ENCODE measurements at regions of chr15 and their contacts with region 1.

Region 1: DNA sequence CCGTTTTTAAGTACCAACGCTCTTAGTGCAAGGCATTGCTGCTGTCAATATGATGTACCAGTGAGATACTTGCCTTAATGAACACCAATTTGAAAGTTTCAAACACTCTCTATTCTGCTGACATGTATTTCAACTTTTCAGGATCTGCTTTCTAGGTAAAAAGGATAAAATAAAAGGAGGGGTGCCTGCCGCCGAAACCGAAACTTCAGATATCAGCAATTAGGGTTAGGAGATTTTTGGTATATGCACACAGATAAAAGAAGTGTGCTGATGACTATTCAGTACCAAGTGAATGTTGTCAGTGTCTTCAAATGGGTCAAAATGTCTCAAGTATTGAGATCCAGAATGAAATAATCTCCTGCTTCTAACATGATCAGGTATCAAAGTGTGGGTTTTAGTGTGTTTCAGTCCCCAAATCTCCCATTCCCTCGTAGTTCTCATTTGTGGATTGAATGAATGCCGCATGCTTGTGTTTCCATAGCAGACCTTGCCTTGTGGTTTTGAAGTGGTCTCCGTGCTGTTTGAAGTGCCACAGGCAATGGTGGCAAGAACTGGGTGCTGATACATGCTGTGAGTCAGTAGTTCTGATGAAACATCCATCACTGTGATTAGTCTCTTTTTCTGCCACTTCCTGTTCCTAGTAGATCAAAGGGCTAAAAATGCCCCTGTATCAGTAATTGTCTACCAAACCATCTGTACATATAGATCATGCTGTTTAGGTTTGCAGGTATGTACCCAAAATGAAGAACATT is 22.5 kb downstream of the CHST14 start:
- DNase-seq: peak in 1 of 2 experiments; percentile 78
- H3K4me3 ChIP-seq: no peak overlapping the region
- H3K27ac ChIP-seq: peak overlapping the region; percentile 52
- H3K4me1 ChIP-seq: peaks cover 15% of the 10 kb centered on the region
- H3K27me3 ChIP-seq: no peaks in the 10 kb centered on the region
- CTCF ChIP-seq: no peak

Region 2: DNA sequence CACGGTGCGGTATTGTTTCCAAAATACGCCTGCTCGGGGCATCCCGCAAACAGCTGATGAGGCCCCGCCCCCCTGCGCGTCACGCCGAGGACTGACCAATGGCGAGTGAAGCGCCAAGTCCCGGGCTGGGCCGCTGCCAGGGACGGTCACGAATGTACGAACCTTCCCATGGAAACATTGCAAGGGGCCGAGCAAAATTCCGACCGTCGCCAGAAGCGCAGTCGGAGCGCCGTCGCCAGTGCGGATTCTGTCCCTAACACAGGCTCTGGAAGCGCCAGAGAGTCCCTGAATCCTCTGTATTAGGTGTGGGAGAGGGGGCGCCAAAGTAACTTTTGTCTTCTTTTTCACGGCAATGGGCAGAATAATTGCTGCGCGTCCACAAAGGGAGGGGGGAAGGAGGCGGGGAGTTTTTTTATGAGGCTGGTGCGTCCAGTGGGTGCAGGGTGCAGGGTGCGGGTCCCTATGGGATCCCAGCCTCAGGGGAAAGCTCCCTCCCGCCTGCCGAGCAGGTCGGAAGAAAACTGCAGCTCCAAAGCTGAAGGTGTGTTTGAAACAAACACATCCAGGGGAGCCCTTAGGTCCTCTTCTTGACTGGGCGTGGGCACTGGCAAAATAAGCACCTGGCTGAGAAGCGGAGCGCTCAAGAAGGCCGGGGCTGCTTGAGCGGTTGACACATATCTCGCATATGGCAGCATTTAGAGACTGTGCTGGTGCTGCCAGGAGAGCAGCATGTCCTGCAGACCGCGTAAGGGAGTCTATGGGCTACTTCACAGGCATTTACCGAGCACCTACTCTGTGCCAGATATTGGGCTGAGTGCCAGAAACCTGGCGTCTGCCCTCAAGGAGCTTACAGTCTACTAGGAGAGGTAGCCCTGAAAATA is 384.2 kb before region 1 on chr15 and contains the start of gene BMF:
- CTCF ChIA-PET with region 1: no interaction called
- POLR2A ChIA-PET with region 1: no interaction called
- intact Hi-C with region 1: no loop called
- DNase-seq: peak; percentile 89 to 97
- H3K4me3 ChIP-seq: peak within 1 kb of the TSS; percentile 66
- H3K27ac ChIP-seq: no peak within 1 kb of the TSS; the same call in 1 of the 2 replicates
- H3K4me1 ChIP-seq: peaks cover 41% of the 10 kb centered on the region
- H3K27me3 ChIP-seq: no peaks in the 10 kb centered on the region
- CTCF ChIP-seq: peak; percentile 58; the same call in 1 of the 2 replicates
- total RNA-seq, gene BMF: 8.2 and 11.0 TPM in 2 replicates

Region 3: DNA sequence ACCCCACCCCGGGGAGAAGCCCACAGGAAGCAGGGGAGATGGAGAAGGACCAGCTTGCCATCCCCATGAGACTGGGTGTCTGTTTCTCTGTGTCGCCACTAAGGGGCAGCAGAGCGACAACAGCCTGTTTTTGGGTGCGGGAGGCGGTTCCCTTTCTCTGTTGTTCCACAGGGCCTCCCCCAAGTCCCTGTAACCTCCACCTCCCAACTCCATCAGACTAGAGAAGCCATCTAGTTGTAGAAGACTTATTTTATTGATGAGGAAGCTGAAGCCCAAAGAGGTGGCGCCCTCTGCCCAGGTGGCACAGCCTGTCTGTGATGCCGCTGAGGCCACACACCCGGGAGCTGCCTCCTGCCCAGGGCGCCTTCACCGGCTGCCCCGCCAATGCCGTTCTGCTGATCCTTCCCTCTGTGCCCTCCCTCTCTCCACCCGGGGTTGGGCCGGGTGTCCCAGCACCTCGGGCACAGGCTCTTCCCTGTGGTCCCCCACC is 148.6 kb before region 1 on chr15:
- CTCF ChIA-PET with region 1: no interaction called
- POLR2A ChIA-PET with region 1: no interaction called
- intact Hi-C with region 1: no loop called
- DNase-seq: peak; percentile 44 to 52
- H3K4me3 ChIP-seq: peak overlapping the region; percentile 51; the same call in 1 of the 2 replicates
- H3K27ac ChIP-seq: peak overlapping the region; percentile 93; the same call in 1 of the 2 replicates
- H3K4me1 ChIP-seq: peaks cover 83% of the 10 kb centered on the region
- H3K27me3 ChIP-seq: no peaks in the 10 kb centered on the region
- CTCF ChIP-seq: peak; percentile 72

Region 4: GRCh38 chr15:40476051-40476450 is 17.2 kb before region 1 on chr15:
- CTCF ChIA-PET with region 1: no interaction called
- POLR2A ChIA-PET with region 1: no interaction called
- intact Hi-C with region 1: no loop called
- DNase-seq: no peak
- H3K4me3 ChIP-seq: no peak overlapping the region
- H3K27ac ChIP-seq: no peak overlapping the region
- H3K4me1 ChIP-seq: peaks cover 29% of the 10 kb centered on the region
- H3K27me3 ChIP-seq: no peaks in the 10 kb centered on the region
- CTCF ChIP-seq: no peak

Region 5: GRCh38 chr15:40512440-40512839 is 19.2 kb after region 1 on chr15:
- CTCF ChIA-PET with region 1: no interaction called
- POLR2A ChIA-PET with region 1: interaction called, 23 read pairs
- intact Hi-C with region 1: no loop called
- DNase-seq: no peak
- H3K4me3 ChIP-seq: peak overlapping the region; percentile 61; the same call in 1 of the 2 replicates
- H3K27ac ChIP-seq: no peak overlapping the region
- H3K4me1 ChIP-seq: peaks cover 7% of the 10 kb centered on the region
- H3K27me3 ChIP-seq: no peaks in the 10 kb centered on the region
- CTCF ChIP-seq: no peak

Measured in PC-9 (cell line).